ENCODE measurements at regions of chr9 and their contacts with region 1.

Region 1: DNA sequence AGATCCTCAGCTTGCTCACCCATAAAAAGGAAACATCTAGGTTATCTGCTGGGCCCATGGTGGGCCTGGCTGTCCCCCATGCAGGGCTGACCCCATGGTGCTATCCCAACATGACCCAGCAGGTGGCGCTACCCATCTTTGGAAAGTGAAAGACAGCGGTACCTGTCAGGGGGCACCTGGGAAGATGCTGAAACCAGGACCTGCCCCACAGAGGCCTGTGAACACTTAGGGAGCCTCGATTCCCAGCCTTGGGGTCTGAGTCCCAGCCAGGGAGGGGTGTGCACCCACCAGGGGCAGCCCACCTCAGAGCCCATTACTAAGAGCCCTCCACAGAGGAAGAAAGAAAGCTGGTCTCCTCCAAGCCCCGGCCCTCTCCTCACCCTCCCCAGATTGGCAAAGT is 46.6 kb upstream of the IPPK start:
- DNase-seq: peak; percentile 46
- H3K4me3 ChIP-seq: no peak overlapping the region
- H3K27ac ChIP-seq: peak overlapping the region; percentile 29
- H3K4me1 ChIP-seq: peaks cover 30% of the 10 kb centered on the region
- H3K27me3 ChIP-seq: no peaks in the 10 kb centered on the region
- CTCF ChIP-seq: peak; percentile 83 to 96

Region 2: DNA sequence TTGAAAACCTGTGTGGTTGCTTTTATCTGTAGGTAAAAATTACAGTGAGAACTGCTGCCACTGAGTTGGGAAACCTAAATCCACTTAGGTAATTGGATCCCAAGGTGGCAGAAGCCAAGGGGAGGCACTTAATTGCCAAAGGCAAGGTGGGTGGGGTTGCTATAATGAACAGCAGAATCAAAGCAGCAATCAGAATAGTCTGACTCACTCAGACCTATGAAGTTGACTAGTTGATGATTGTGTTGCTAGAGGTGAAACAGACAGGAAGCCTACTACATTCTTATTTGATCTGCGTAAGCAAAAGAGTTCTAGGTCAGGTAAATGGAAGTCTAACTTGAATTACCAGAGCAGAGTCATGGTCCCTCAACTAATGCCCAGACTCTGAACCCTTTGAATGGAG is 65.4 kb after region 1 on chr9:
- CTCF ChIA-PET with region 1: no interaction called
- dilution Hi-C with region 1: no loop called
- in situ Hi-C with region 1: loop called (anchors 5 kb)
- intact Hi-C with region 1: no loop called
- DNase-seq: peak; percentile 94
- H3K4me3 ChIP-seq: no peak overlapping the region
- H3K27ac ChIP-seq: peak overlapping the region; percentile 75
- H3K4me1 ChIP-seq: peaks cover 16% of the 10 kb centered on the region
- H3K27me3 ChIP-seq: no peaks in the 10 kb centered on the region
- CTCF ChIP-seq: no peak

Measured in mammary epithelial cell (primary cell).